ENCODE measurements at regions of chr10 and their contacts with region 1.

Region 1: DNA sequence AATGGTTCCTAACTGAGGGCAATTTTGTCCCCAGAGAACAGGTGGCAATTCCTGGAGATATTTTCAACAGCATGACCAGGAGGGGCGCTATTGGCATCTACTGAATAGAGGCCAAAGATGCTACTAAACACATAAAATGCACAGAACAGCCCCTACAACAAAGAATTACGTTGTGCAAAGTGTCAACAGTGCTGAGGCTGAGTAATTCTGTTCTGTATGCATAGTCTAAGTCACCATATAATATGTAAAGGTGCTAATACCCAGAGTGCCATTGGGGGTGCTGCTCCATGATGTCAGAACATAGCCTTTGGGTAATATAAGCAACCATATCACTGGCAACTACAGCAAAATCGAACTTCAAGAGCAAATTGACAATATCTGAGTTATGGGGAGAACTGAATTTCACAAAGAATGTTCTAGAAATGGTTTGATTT is 213.3 kb upstream of the PHYHIPL start:
- DNase-seq: peak; percentile 7
- H3K4me3 ChIP-seq: no peak overlapping the region
- H3K27ac ChIP-seq: no peak overlapping the region
- H3K4me1 ChIP-seq: no peaks in the 10 kb centered on the region
- CTCF ChIP-seq: peak; percentile 74

Region 2: GRCh38 chr10:59033622-59034021 is 70.5 kb after region 1 on chr10:
- CTCF ChIA-PET with region 1: no interaction called
- POLR2A ChIA-PET with region 1: interaction called, 3 read pairs
- intact Hi-C with region 1: loop called (anchors 5 kb)
- DNase-seq: no peak
- H3K4me3 ChIP-seq: no peak overlapping the region
- H3K27ac ChIP-seq: no peak overlapping the region
- H3K4me1 ChIP-seq: no peaks in the 10 kb centered on the region
- CTCF ChIP-seq: no peak

Measured in OCI-LY7 (cell line).